Heart right ventricle (tissue), 16 donors: ENCODE measurements at regions of chr3 and their contacts with region 1.

Region 1: GRCh38 chr3:170811928-170812591 is 57.9 kb downstream of the RPL22L1 start:
- DNase-seq: peak; percentile 14 to 66
- ATAC-seq: peak; percentile 51 to 81 (median 72)
- H3K4me3 ChIP-seq: no peak overlapping the region
- H3K27ac ChIP-seq: no peak overlapping the region
- H3K4me1 ChIP-seq: peaks cover 0 to 6% (median 0%) of the 10 kb centered on the region in 9 donors
- H3K27me3 ChIP-seq: no peaks in the 10 kb centered on the region
- CTCF ChIP-seq: peak; percentile 76 to 90 (median 86)

Region 2: DNA sequence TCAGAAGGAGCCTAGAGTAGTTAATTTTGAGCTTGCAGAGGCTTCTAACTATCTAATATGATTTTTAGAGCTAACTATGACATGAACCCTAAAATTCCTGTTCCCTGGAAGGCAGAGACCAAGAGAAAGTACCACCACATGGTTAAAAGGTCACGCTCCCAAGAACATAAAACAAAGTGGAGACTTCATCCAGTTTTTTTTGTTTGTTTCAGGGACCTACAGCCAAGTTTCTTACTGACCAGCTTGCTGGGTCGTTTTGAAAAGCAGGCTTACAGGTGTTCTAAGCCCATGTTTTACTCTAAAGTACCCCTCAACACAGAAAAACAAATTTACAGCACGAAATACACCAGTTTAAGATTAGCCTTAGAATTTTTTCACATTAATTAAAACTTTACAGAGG is 494.1 kb before region 1 on chr3:
- intact Hi-C with region 1: loop called in 4 of 10 experiments (anchors 5 to 10 kb)
- DNase-seq: no peak
- ATAC-seq: no peak
- H3K4me3 ChIP-seq: no peak overlapping the region
- H3K27ac ChIP-seq: no peak overlapping the region
- H3K4me1 ChIP-seq: peaks cover 0 to 18% (median 0%) of the 10 kb centered on the region in 9 donors
- H3K27me3 ChIP-seq: no peaks in the 10 kb centered on the region
- CTCF ChIP-seq: no peak

Region 3: GRCh38 chr3:170542704-170543103 is 269.4 kb before region 1 on chr3:
- intact Hi-C with region 1: loop called in 1 of 10 experiments (anchors 10 kb)
- DNase-seq: no peak
- ATAC-seq: no peak
- H3K4me3 ChIP-seq: no peak overlapping the region
- H3K27ac ChIP-seq: no peak overlapping the region
- H3K4me1 ChIP-seq: no peaks in the 10 kb centered on the region
- H3K27me3 ChIP-seq: peaks cover 0 to 15% (median 3%) of the 10 kb centered on the region in 7 donors
- CTCF ChIP-seq: no peak

Region 4: DNA sequence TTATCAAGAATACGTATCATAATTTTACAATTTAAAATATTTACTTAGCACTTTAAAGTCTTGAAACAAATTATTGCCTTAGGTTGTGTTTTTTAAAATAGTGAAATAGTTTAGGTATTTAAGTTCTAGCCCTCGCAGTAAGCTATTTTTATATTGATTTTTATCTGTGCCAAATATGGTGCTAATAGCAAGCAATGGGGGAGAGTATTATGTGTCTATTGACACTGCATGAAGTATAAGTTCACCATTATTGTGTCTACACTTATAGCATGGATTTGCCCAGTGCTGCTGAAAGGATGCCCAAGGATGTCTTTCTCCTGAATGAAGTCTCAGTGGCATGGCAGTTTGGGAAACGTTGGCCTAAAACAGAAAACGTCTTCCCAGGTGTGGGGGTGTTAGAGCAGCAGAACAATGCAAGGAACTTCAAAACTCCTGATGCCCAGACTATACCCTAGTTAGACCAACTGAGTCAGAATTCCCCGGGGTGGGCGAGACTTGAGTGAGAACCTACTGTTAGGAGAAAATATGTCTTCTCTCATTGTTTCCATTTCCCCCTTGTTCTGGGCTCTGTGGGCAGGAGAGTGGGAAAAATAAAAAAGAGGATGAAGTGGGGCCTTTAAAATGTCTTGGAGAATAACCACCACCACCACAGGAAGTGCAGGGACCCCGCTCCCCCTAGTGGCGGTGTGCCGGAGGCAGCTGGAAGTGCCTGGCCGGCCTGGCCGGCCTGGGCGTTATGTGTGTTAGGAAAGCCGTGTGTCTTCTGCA is 122.0 kb before region 1 on chr3:
- intact Hi-C with region 1: loop called in 4 of 10 experiments (anchors 5 to 10 kb)
- DNase-seq: peak; percentile 57 to 72
- ATAC-seq: peak in 7 of 8 donors; percentile 51 to 84 (median 73)
- H3K4me3 ChIP-seq: no peak overlapping the region
- H3K27ac ChIP-seq: no peak overlapping the region
- H3K4me1 ChIP-seq: peaks cover 0 to 5% (median 0%) of the 10 kb centered on the region in 9 donors
- H3K27me3 ChIP-seq: no peaks in the 10 kb centered on the region
- CTCF ChIP-seq: peak; percentile 48 to 84 (median 78)

Region 5: GRCh38 chr3:170709046-170709445 is 103.0 kb before region 1 on chr3:
- intact Hi-C with region 1: loop called in 1 of 10 experiments (anchors 10 kb)
- DNase-seq: no peak
- ATAC-seq: peak in 6 of 8 donors; percentile 51 to 98 (median 63)
- H3K4me3 ChIP-seq: no peak overlapping the region
- H3K27ac ChIP-seq: no peak overlapping the region
- H3K4me1 ChIP-seq: no peaks in the 10 kb centered on the region
- H3K27me3 ChIP-seq: peaks cover 0 to 8% (median 0%) of the 10 kb centered on the region in 7 donors
- CTCF ChIP-seq: no peak